ENCODE measurements at regions of chr2 and their contacts with region 1.

Region 1: DNA sequence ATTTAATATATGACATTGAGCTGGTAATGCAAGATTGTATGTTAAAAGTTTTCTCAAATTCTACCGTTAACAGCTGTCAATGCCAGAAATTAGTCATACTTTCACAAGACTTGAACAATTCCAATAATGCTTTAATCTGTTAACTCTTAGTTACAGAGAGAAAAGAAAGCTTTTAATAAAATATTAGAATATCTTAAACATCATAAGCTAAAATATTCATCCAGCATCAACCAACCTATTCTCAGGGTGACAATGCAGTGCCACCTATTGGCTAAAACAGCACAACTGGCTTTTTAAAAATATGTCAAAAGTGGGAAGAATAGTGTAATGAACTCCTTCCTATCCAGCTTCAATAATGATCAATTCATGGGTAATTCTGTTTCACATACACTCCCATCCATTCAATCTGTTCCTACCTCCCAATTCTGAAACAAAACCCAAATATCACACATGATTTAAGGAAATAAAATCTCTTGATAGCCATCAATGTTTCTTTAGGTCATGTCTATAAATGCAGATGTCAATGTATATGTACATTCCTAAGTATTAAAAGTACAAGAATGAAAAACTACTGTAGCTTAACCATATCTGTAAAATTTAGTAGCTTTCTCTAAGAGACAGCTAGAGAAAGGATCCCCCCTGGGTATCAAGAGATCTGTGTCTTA is 79.8 kb upstream of the CCDC141 start:
- DNase-seq: no peak
- ATAC-seq: peak; percentile 79
- H3K4me3 ChIP-seq: no peak overlapping the region
- H3K27ac ChIP-seq: no peak overlapping the region
- H3K4me1 ChIP-seq: no peaks in the 10 kb centered on the region
- H3K27me3 ChIP-seq: no peaks in the 10 kb centered on the region
- CTCF ChIP-seq: peak; percentile 57 to 76 (median 63); a peak in 5 of 6 replicates
- EP300 ChIP-seq: no peak
- POLR2A ChIP-seq: no peak
- RAD21 ChIP-seq: peak; percentile 90

Region 2: GRCh38 chr2:178819992-178820391 is 309.7 kb before region 1 on chr2:
- CTCF ChIA-PET with region 1: interaction called, 20 read pairs
- POLR2A ChIA-PET with region 1: no interaction called
- RAD21 ChIA-PET with region 1: interaction called, 5 read pairs
- SMC1A ChIA-PET with region 1: interaction called, 10 read pairs
- in situ Hi-C with region 1: no loop called
- intact Hi-C with region 1: no loop called
- DNase-seq: peak; percentile 17
- ATAC-seq: peak; percentile 90
- H3K4me3 ChIP-seq: no peak overlapping the region
- H3K27ac ChIP-seq: no peak overlapping the region; the same call in 1 of the 2 replicates
- H3K4me1 ChIP-seq: peaks cover 6% of the 10 kb centered on the region; the same call in 1 of the 2 replicates
- H3K27me3 ChIP-seq: no peaks in the 10 kb centered on the region
- CTCF ChIP-seq: no peak
- EP300 ChIP-seq: no peak
- POLR2A ChIP-seq: no peak
- RAD21 ChIP-seq: 0 out of 2 replicates have a peak, but pooled peaks have one; percentile 3

Region 3: GRCh38 chr2:178905261-178905660 is 224.4 kb before region 1 on chr2:
- CTCF ChIA-PET with region 1: interaction called, 100 read pairs
- POLR2A ChIA-PET with region 1: no interaction called
- RAD21 ChIA-PET with region 1: interaction called, 22 read pairs
- SMC1A ChIA-PET with region 1: interaction called, 78 read pairs
- in situ Hi-C with region 1: no loop called
- intact Hi-C with region 1: no loop called
- DNase-seq: no peak
- ATAC-seq: no peak
- H3K4me3 ChIP-seq: no peak overlapping the region
- H3K27ac ChIP-seq: no peak overlapping the region
- H3K4me1 ChIP-seq: no peaks in the 10 kb centered on the region
- H3K27me3 ChIP-seq: no peaks in the 10 kb centered on the region
- CTCF ChIP-seq: no peak
- EP300 ChIP-seq: no peak
- POLR2A ChIP-seq: no peak
- RAD21 ChIP-seq: no peak

Region 4: DNA sequence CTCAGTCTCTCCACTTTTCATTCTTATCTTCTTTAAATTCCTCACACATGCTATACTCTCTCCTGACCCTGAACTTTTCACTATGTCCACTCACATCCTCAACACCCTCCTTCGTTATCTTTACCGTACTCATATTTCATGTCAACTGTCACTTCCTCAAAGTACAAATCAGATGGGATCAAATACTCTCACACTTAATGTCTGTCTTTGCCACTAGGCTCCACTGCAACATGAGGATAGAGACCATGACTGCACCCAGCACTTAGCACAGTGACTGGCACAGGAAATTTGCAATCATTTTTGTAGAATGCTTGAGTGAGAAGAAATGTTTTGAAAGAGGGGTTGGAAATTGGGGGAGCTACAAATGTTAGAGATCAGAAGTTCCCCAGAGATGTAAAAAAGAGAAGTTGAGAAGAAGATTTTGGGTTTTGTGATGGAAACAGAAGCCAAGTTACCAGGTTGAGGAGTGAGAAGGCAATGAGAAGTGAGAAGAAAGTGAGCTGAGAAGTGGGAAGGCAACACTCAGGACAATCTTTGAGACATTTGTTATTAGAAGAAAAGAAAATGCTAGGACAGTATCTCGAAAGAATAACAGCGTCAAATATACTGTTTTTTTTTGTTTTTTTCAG is 166.8 kb before region 1 on chr2:
- CTCF ChIA-PET with region 1: interaction called, 36 read pairs
- POLR2A ChIA-PET with region 1: no interaction called
- RAD21 ChIA-PET with region 1: interaction called, 13 read pairs
- SMC1A ChIA-PET with region 1: interaction called, 23 read pairs
- in situ Hi-C with region 1: no loop called
- intact Hi-C with region 1: no loop called
- DNase-seq: no peak
- ATAC-seq: no peak
- H3K4me3 ChIP-seq: no peak overlapping the region
- H3K27ac ChIP-seq: no peak overlapping the region
- H3K4me1 ChIP-seq: no peaks in the 10 kb centered on the region
- H3K27me3 ChIP-seq: no peaks in the 10 kb centered on the region
- CTCF ChIP-seq: no peak
- EP300 ChIP-seq: no peak
- POLR2A ChIP-seq: no peak
- RAD21 ChIP-seq: no peak

Region 5: DNA sequence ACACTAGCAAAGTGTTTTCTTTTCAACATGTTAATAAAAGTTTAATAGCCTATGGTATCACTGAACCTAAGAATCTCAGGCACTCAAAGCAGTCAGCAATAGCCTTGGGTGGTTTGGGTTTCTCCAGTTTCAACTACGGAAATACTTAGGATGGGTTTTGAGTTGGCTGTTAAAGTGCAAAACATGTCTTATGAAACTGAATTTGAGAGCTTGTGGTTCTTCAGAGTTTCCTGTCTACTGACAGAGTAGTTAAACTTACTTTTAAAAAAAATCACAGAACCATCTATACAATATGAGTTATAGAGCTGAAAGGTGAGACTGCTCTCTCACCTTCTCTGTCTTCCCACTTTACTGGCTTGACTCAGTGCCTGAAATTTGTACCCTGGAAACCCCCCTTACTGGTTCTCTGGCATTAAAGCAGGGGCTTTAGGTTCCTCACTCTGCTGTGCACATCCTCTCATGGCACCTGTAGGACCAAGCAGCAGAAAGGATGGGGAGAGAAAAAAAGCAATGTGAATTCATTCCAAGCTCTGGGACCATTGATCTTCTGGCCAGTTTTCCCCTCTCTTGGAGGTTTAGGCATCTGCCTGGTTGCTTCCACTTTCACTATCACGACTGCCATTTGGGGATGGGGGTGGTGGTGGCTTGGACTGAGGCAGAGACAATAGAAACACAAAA is 97.8 kb before region 1 on chr2:
- CTCF ChIA-PET with region 1: interaction called, 9 read pairs
- POLR2A ChIA-PET with region 1: interaction called, 3 read pairs
- RAD21 ChIA-PET with region 1: interaction called, 37 read pairs
- SMC1A ChIA-PET with region 1: interaction called, 42 read pairs
- in situ Hi-C with region 1: no loop called
- intact Hi-C with region 1: no loop called
- DNase-seq: peak; percentile 88
- ATAC-seq: peak; percentile 94
- H3K4me3 ChIP-seq: peak overlapping the region; percentile 46
- H3K27ac ChIP-seq: peak overlapping the region; percentile 95
- H3K4me1 ChIP-seq: peaks cover 15% of the 10 kb centered on the region
- H3K27me3 ChIP-seq: no peaks in the 10 kb centered on the region
- CTCF ChIP-seq: no peak
- EP300 ChIP-seq: peak; percentile 51 to 65; a peak in 2 of 4 replicates
- POLR2A ChIP-seq: no peak
- RAD21 ChIP-seq: 0 out of 2 replicates have a peak, but pooled peaks have one; percentile 9

Region 6: GRCh38 chr2:179096090-179096489 is 33.6 kb before region 1 on chr2:
- CTCF ChIA-PET with region 1: interaction called, 13 read pairs
- POLR2A ChIA-PET with region 1: no interaction called
- RAD21 ChIA-PET with region 1: interaction called, 7 read pairs
- SMC1A ChIA-PET with region 1: interaction called, 23 read pairs
- in situ Hi-C with region 1: no loop called
- intact Hi-C with region 1: no loop called
- DNase-seq: peak; percentile 40
- ATAC-seq: peak; percentile 93
- H3K4me3 ChIP-seq: no peak overlapping the region
- H3K27ac ChIP-seq: 0 out of 2 replicates have a peak overlapping the region, but pooled peaks have one; percentile 23
- H3K4me1 ChIP-seq: peaks cover 19% of the 10 kb centered on the region
- H3K27me3 ChIP-seq: no peaks in the 10 kb centered on the region
- CTCF ChIP-seq: no peak
- EP300 ChIP-seq: peak; percentile 48 to 50; a peak in 2 of 4 replicates
- POLR2A ChIP-seq: no peak
- RAD21 ChIP-seq: no peak

Region 7: GRCh38 chr2:179592167-179592936 is 462.6 kb after region 1 on chr2:
- CTCF ChIA-PET with region 1: no interaction called
- POLR2A ChIA-PET with region 1: no interaction called
- RAD21 ChIA-PET with region 1: no interaction called
- SMC1A ChIA-PET with region 1: no interaction called
- in situ Hi-C with region 1: no loop called
- intact Hi-C with region 1: no loop called
- DNase-seq: no peak
- ATAC-seq: no peak
- H3K4me3 ChIP-seq: no peak overlapping the region
- H3K27ac ChIP-seq: no peak overlapping the region
- H3K4me1 ChIP-seq: no peaks in the 10 kb centered on the region
- H3K27me3 ChIP-seq: no peaks in the 10 kb centered on the region
- CTCF ChIP-seq: no peak
- EP300 ChIP-seq: no peak
- POLR2A ChIP-seq: no peak
- RAD21 ChIP-seq: no peak

Measured in GM12878 (cell line).